Heart left ventricle (tissue), 16 donors: ENCODE measurements at regions of chr11 and their contacts with region 1.

Region 1: GRCh38 chr11:130644187-130644586 is 195.7 kb downstream of the ADAMTS15 start:
- DNase-seq: no peak
- ATAC-seq: no peak
- H3K4me3 ChIP-seq: no peak overlapping the region
- H3K27ac ChIP-seq: no peak overlapping the region
- H3K4me1 ChIP-seq: peaks cover 0 to 33% (median 9%) of the 10 kb centered on the region in 12 donors
- H3K27me3 ChIP-seq: no peaks in the 10 kb centered on the region
- CTCF ChIP-seq: no peak
- POLR2A ChIP-seq: no peak

Region 2: GRCh38 chr11:130553306-130553705 is 90.9 kb before region 1 on chr11:
- intact Hi-C with region 1: no loop called
- DNase-seq: no peak
- ATAC-seq: no peak
- H3K4me3 ChIP-seq: no peak overlapping the region
- H3K27ac ChIP-seq: no peak overlapping the region
- H3K4me1 ChIP-seq: peaks cover 0 to 20% (median 5%) of the 10 kb centered on the region in 12 donors
- H3K27me3 ChIP-seq: no peaks in the 10 kb centered on the region
- CTCF ChIP-seq: no peak
- POLR2A ChIP-seq: no peak

Region 3: DNA sequence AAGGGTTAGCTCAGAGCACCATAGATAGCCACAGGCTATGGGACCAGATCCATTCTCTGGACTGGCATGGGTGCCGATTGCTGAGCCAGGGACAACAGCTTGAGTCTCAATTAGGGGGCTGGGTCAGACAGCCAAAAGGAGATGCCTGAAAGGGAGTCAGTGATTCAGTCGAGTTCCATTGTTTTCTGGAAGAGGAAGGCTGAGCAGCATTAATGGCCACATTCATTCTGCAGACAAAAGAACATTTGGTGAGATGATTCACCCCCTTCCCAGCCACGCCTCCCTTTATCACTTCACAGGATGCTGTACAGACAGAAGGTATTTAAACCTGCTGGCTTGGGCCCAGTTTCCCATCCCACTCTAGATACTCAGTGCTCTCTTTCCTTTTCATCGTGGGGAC is 63.8 kb before region 1 on chr11:
- intact Hi-C with region 1: loop called in 2 of 10 experiments (anchors 10 kb)
- DNase-seq: peak in 3 of 5 donors; percentile 25 to 81 (median 59)
- ATAC-seq: peak; percentile 11 to 84 (median 71)
- H3K4me3 ChIP-seq: no peak overlapping the region
- H3K27ac ChIP-seq: peak overlapping the region in 10 of 12 donors; percentile 7 to 73 (median 54)
- H3K4me1 ChIP-seq: peaks cover 0 to 35% (median 15%) of the 10 kb centered on the region in 12 donors
- H3K27me3 ChIP-seq: no peaks in the 10 kb centered on the region
- CTCF ChIP-seq: no peak
- POLR2A ChIP-seq: no peak

Region 4: GRCh38 chr11:130609121-130610035 is 34.8 kb before region 1 on chr11:
- intact Hi-C with region 1: loop called in 1 of 10 experiments (anchors 5 kb)
- DNase-seq: peak; percentile 74 to 91 (median 80)
- ATAC-seq: peak; percentile 75 to 88 (median 85)
- H3K4me3 ChIP-seq: no peak overlapping the region
- H3K27ac ChIP-seq: peak overlapping the region; percentile 71 to 90 (median 82)
- H3K4me1 ChIP-seq: peaks cover 0 to 69% (median 36%) of the 10 kb centered on the region in 12 donors
- H3K27me3 ChIP-seq: no peaks in the 10 kb centered on the region
- CTCF ChIP-seq: no peak
- POLR2A ChIP-seq: no peak

Region 5: GRCh38 chr11:130861902-130862860 is 218.0 kb after region 1 on chr11:
- intact Hi-C with region 1: no loop called
- DNase-seq: peak; percentile 87 to 95 (median 90)
- ATAC-seq: peak; percentile 38 to 72 (median 58)
- H3K4me3 ChIP-seq: peak overlapping the region in 1 of 12 donors; percentile 2
- H3K27ac ChIP-seq: peak overlapping the region in 1 of 12 donors; percentile 28
- H3K4me1 ChIP-seq: peaks cover 0 to 37% (median 15%) of the 10 kb centered on the region in 12 donors
- H3K27me3 ChIP-seq: no peaks in the 10 kb centered on the region
- CTCF ChIP-seq: peak; percentile 99 to 100 (median 100)
- POLR2A ChIP-seq: no peak